Breast epithelium (tissue), 4 donors: ENCODE measurements at regions of chr13 and their contacts with region 1.

Region 1: DNA sequence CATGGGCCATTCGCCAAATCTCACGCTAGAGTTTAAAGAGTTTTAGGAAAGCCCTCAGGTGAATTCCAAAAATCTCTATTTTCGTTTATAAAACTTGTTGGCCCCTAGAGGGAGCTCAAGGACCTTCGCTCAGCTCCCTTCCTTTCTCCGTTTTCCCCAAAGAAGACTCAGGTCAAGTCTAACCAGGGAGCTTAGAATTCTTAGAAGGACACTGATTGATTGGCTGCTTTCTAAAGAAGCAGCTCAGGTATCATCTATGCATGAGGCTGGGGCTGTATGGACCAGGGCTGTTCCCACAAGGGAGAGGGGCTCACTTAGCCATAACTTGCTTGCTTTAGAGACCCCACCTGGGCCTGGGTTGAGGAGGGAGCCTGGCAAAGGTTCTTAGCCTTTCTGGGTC is 20.5 kb downstream of the DZIP1 start:
- DNase-seq: no peak
- H3K4me3 ChIP-seq: no peak overlapping the region
- H3K27ac ChIP-seq: no peak overlapping the region
- H3K4me1 ChIP-seq: no peaks in the 10 kb centered on the region
- H3K27me3 ChIP-seq: no peaks in the 10 kb centered on the region
- CTCF ChIP-seq: peak; percentile 42 to 59 (median 51)
- POLR2A ChIP-seq: no peak

Region 2: GRCh38 chr13:95660981-95661581 is 37.1 kb after region 1 on chr13:
- intact Hi-C with region 1: no loop called
- DNase-seq: no peak
- H3K4me3 ChIP-seq: no peak overlapping the region
- H3K27ac ChIP-seq: no peak overlapping the region
- H3K4me1 ChIP-seq: no peaks in the 10 kb centered on the region
- H3K27me3 ChIP-seq: no peaks in the 10 kb centered on the region
- CTCF ChIP-seq: peak in 1 of 3 donors; percentile 41
- POLR2A ChIP-seq: no peak

Region 3: DNA sequence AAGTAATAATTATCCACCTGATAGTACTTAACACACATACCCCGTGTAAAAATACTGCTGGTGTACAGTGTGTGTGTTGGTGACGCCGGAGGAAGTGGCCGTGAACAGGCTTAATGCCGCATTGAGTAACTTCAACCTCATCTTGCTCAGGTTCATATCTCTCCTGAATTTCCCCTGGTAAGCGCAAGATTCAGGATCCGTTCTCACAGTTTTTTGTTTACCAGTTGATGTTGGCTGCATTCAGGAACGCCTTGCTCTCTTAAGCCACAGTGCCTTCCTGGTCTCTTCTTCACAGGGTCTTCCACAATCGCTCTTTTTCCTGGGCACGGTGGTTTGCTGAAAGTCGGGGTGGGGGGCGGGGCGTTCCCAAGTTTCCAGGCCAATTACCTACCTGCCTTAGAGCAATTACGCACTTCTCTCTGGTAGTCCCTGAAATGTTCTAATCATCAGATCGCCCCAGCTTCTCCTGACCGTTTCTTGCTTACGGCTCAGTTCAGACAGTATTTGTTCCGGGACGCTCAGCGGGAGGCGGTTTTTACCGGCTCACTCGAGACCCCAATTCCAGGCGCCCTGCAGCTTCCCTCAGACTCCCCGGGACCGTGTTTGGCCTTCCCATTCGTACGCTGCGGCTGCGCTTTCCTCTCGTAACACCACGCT is 52.2 kb after region 1 on chr13:
- intact Hi-C with region 1: no loop called
- DNase-seq: peak in 1 of 2 donors; percentile 25
- H3K4me3 ChIP-seq: peak overlapping the region; percentile 78 to 94 (median 85)
- H3K27ac ChIP-seq: peak overlapping the region; percentile 95 to 96
- H3K4me1 ChIP-seq: peaks cover 0 to 13% of the 10 kb centered on the region in 2 donors
- H3K27me3 ChIP-seq: no peaks in the 10 kb centered on the region
- CTCF ChIP-seq: no peak
- POLR2A ChIP-seq: no peak

Region 4: DNA sequence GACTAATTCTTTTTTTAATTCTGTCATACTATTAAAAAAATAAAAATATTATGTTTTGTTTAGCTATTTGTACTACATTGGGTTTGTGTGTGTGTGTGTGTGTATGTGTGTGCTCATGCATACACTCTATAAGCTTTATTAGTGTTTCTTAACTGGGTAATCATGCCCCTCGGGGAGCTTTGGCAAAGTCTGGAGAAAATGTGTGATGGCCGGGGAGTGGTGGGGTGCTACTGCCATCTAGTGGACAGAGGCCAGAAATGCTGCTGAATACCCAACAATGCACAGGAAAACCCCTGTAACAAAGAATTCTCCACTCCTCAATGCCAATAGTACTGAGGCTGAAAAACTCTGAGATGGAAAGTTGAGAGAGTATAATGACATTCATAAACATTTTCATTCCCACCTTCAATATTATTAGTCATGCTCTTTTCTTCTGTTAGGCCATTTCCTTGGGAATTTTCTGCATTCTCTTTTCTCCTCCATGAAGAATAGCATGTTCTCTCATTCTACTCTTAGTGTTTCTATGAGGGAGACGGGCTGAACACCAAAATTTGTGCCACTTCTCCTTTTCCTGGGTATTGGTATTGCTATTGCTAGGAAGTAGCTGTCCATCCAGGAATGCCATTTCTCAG is 210.2 kb after region 1 on chr13:
- intact Hi-C with region 1: loop called (anchors 10 kb)
- DNase-seq: peak in 1 of 2 donors; percentile 25
- H3K4me3 ChIP-seq: no peak overlapping the region
- H3K27ac ChIP-seq: no peak overlapping the region
- H3K4me1 ChIP-seq: no peaks in the 10 kb centered on the region
- H3K27me3 ChIP-seq: no peaks in the 10 kb centered on the region
- CTCF ChIP-seq: peak; percentile 67 to 95 (median 90)
- POLR2A ChIP-seq: no peak